Activated naive CD4-positive, alpha-beta T cell treated with anti-CD3 and anti-CD28 coated beads for 36 hours (primary cell): ENCODE measurements at regions of chr14 and their contacts with region 1.

Region 1: GRCh38 chr14:68788996-68789820 is 3.7 kb downstream of the ZFP36L1 start:
- DNase-seq: peak; percentile 91
- H3K4me3 Mint-ChIP-seq: peak overlapping the region; percentile 90
- H3K27ac Mint-ChIP-seq: peak overlapping the region; percentile 100
- H3K4me1 Mint-ChIP-seq: peaks cover 55% of the 10 kb centered on the region
- H3K27me3 Mint-ChIP-seq: no peaks in the 10 kb centered on the region

Region 2: GRCh38 chr14:68377459-68377858 is 411.7 kb before region 1 on chr14:
- CTCF ChIA-PET with region 1: interaction called, 3 read pairs
- intact Hi-C with region 1: loop called (anchors 10 kb)
- DNase-seq: peak; percentile 6
- H3K4me3 Mint-ChIP-seq: no peak overlapping the region
- H3K27ac Mint-ChIP-seq: no peak overlapping the region
- H3K4me1 Mint-ChIP-seq: peaks cover 50% of the 10 kb centered on the region
- H3K27me3 Mint-ChIP-seq: no peaks in the 10 kb centered on the region

Region 3: GRCh38 chr14:68466491-68467032 is 322.6 kb before region 1 on chr14:
- CTCF ChIA-PET with region 1: no interaction called
- intact Hi-C with region 1: loop called (anchors 5 kb)
- DNase-seq: no peak
- H3K4me3 Mint-ChIP-seq: no peak overlapping the region
- H3K27ac Mint-ChIP-seq: no peak overlapping the region
- H3K4me1 Mint-ChIP-seq: peaks cover 30% of the 10 kb centered on the region
- H3K27me3 Mint-ChIP-seq: no peaks in the 10 kb centered on the region

Region 4: DNA sequence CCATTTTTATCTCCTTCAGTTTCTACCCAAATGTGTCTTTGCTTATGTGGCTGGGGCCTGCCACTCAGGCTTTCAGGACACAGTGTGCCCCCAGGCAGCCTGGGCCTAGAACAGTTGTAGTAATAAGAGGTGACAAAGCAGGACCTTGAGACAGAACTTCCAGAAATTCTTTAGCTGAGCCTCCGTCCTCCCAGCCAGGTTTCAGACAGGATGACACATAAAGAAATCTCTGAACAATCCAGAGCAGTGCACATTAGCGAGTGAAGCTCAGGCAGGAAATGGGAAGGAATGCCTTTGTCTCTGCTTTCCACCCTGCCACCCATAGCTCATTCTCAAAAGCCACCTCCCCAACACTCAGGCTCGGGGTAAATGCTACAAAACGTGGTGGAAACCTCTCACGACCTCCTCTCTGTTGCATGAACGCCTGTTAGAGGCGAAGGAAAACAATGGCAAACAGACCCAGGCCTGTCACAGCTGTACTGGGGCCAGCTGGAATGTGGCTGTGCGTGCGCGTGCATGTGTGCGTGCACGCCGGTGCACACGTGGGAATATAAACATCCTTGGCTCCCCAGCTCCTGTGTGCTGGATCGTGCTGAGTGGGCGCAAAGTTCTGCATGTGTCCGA is 283.1 kb before region 1 on chr14:
- CTCF ChIA-PET with region 1: interaction called, 10 read pairs
- intact Hi-C with region 1: loop called (anchors 5 kb)
- DNase-seq: peak; percentile 11
- H3K4me3 Mint-ChIP-seq: no peak overlapping the region
- H3K27ac Mint-ChIP-seq: peak overlapping the region; percentile 20
- H3K4me1 Mint-ChIP-seq: peaks cover 44% of the 10 kb centered on the region
- H3K27me3 Mint-ChIP-seq: no peaks in the 10 kb centered on the region

Region 5: GRCh38 chr14:68718023-68718995 is 70.9 kb before region 1 on chr14:
- CTCF ChIA-PET with region 1: interaction called, 45 read pairs
- intact Hi-C with region 1: loop called (anchors 1 kb)
- DNase-seq: peak; percentile 34
- H3K4me3 Mint-ChIP-seq: no peak overlapping the region
- H3K27ac Mint-ChIP-seq: no peak overlapping the region
- H3K4me1 Mint-ChIP-seq: peaks cover 32% of the 10 kb centered on the region
- H3K27me3 Mint-ChIP-seq: no peaks in the 10 kb centered on the region

Region 6: GRCh38 chr14:68749487-68750475 is 39.4 kb before region 1 on chr14:
- CTCF ChIA-PET with region 1: no interaction called
- intact Hi-C with region 1: no loop called
- DNase-seq: no peak
- H3K4me3 Mint-ChIP-seq: no peak overlapping the region
- H3K27ac Mint-ChIP-seq: no peak overlapping the region
- H3K4me1 Mint-ChIP-seq: no peaks in the 10 kb centered on the region
- H3K27me3 Mint-ChIP-seq: no peaks in the 10 kb centered on the region

Region 7: GRCh38 chr14:69464829-69465228 is 675.6 kb after region 1 on chr14:
- CTCF ChIA-PET with region 1: no interaction called
- intact Hi-C with region 1: no loop called
- DNase-seq: no peak
- H3K4me3 Mint-ChIP-seq: no peak overlapping the region
- H3K27ac Mint-ChIP-seq: no peak overlapping the region
- H3K4me1 Mint-ChIP-seq: no peaks in the 10 kb centered on the region
- H3K27me3 Mint-ChIP-seq: no peaks in the 10 kb centered on the region